ENCODE measurements at regions of chr11 and their contacts with region 1.

Region 1: GRCh38 chr11:123707606-123708205 is 33.8 kb downstream of the ZNF202 start:
- DNase-seq: peak; percentile 81
- ATAC-seq: peak; percentile 85
- H3K4me3 Mint-ChIP-seq: no peak overlapping the region
- H3K27ac Mint-ChIP-seq: no peak overlapping the region
- H3K4me1 Mint-ChIP-seq: no peaks in the 10 kb centered on the region
- H3K27me3 Mint-ChIP-seq: peaks cover 12% of the 10 kb centered on the region

Region 2: GRCh38 chr11:123511037-123511870 is 196.5 kb before region 1 on chr11:
- CTCF ChIA-PET with region 1: no interaction called
- POLR2A ChIA-PET with region 1: no interaction called
- intact Hi-C with region 1: loop called in 1 of 2 experiments (anchors 5 kb)
- DNase-seq: peak; percentile 89
- ATAC-seq: peak; percentile 99
- H3K4me3 Mint-ChIP-seq: no peak overlapping the region
- H3K27ac Mint-ChIP-seq: no peak overlapping the region
- H3K4me1 Mint-ChIP-seq: peaks cover 8% of the 10 kb centered on the region
- H3K27me3 Mint-ChIP-seq: no peaks in the 10 kb centered on the region

Region 3: DNA sequence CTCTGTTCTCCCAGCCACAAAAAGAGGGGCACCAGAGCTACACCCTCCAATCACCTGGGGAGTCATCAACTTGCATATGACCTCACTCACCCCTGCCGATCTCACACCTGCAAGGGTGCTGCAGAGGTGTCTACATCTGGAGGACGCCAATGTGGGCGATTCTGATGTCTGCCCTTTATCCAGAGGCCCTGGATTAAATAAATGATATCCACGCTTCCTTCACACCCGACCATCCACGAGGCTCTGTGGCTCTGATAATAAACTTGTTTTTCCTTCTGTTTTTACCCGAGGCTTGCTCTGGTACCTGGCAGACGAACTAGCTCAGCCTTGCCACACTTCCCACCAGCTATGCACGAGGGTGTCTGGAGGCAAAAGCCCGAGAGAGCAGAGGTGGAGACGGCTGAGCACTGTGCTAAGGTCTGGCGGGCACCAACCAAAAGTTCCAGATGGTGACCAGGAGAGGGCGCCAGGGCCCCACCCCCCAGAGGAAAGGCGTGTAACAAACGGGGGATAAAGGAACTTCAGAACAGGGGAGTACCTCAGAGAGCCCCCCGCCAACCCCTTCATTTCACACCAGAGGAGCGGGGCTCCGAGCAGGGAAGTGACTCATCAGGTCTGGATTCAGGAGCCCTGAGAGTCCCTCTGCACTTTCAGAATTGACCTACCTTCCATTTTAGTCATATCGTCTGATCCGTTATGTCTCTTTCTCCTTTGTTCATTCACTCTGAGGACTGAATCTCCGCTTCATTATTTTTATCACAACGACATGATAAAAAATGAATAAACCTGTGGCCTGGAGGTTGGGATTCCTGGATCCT is 66.8 kb before region 1 on chr11:
- CTCF ChIA-PET with region 1: interaction called, 126 read pairs
- POLR2A ChIA-PET with region 1: no interaction called
- intact Hi-C with region 1: loop called (anchors 1 kb)
- DNase-seq: peak; percentile 77
- ATAC-seq: peak; percentile 91
- H3K4me3 Mint-ChIP-seq: no peak overlapping the region
- H3K27ac Mint-ChIP-seq: no peak overlapping the region
- H3K4me1 Mint-ChIP-seq: peaks cover 2% of the 10 kb centered on the region
- H3K27me3 Mint-ChIP-seq: peaks cover 7% of the 10 kb centered on the region

Region 4: GRCh38 chr11:123696183-123696582 is 11.5 kb before region 1 on chr11:
- CTCF ChIA-PET with region 1: interaction called, 22 read pairs
- POLR2A ChIA-PET with region 1: no interaction called
- intact Hi-C with region 1: no loop called
- DNase-seq: no peak
- ATAC-seq: no peak
- H3K4me3 Mint-ChIP-seq: no peak overlapping the region
- H3K27ac Mint-ChIP-seq: no peak overlapping the region
- H3K4me1 Mint-ChIP-seq: no peaks in the 10 kb centered on the region
- H3K27me3 Mint-ChIP-seq: peaks cover 22% of the 10 kb centered on the region

Region 5: GRCh38 chr11:123725995-123726655 is 18.4 kb after region 1 on chr11:
- CTCF ChIA-PET with region 1: interaction called, 5 read pairs
- POLR2A ChIA-PET with region 1: no interaction called
- intact Hi-C with region 1: loop called in 1 of 2 experiments (anchors 1 kb)
- DNase-seq: no peak
- ATAC-seq: no peak
- H3K4me3 Mint-ChIP-seq: no peak overlapping the region
- H3K27ac Mint-ChIP-seq: no peak overlapping the region
- H3K4me1 Mint-ChIP-seq: no peaks in the 10 kb centered on the region
- H3K27me3 Mint-ChIP-seq: no peaks in the 10 kb centered on the region